Activated CD4-positive, alpha-beta memory T cell treated with anti-CD3 and anti-CD28 coated beads for 36 hours (primary cell): ENCODE measurements at regions of chr1 and their contacts with region 1.

Region 1: GRCh38 chr1:205591522-205592351 is 40.1 kb downstream of the ELK4 start:
- DNase-seq: peak; percentile 94
- H3K4me3 Mint-ChIP-seq: peak overlapping the region; percentile 77
- H3K27ac Mint-ChIP-seq: peak overlapping the region; percentile 79
- H3K4me1 Mint-ChIP-seq: peaks cover 29% of the 10 kb centered on the region
- H3K27me3 Mint-ChIP-seq: no peaks in the 10 kb centered on the region

Region 2: DNA sequence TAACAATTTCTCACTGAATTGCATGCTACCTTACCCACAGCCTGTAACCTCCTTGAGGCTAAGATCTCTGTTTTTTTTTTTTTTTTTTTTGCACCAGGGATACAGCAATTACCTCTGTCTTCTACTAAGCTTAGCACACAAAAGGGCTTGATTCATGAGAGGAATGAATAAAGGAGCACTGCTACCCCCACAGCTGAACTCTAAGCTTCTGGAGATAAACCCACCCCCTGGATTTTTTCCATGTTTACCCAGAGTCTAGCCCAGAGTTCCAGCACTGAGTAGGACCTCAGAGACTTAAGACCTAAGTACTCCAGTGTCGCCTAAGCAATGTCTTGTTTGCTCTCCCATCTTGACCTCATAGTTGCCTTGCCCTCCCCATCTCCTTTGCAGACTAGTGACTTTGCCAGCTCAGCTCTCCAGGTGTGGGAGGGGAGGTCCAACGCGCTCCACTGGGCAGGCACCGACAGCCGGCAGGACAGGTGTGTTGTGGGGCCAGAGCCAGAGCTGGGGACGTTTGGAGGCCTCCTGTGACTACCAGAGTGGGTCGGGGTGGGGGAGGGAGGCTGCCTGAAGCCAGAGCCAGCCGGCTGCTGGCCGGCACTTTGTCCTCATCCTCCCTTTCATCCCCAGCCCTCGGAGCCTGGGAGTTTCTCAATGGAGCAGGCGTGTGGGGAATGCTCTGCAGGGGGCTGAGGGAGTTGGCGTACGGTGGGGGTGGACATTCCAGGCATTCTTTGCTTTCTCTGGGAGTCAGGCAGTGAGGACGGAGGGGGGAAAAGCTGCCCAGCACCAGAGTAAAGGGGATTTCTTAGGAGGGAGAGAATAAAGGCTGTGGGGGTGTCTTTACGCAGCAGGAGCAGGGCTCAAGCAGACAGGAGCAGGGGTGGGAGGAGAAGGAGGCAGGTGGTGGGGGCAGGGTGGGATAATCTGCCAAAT is 290.6 kb before region 1 on chr1:
- CTCF ChIA-PET with region 1: no interaction called
- POLR2A ChIA-PET with region 1: no interaction called
- intact Hi-C with region 1: no loop called
- DNase-seq: no peak
- H3K4me3 Mint-ChIP-seq: no peak overlapping the region
- H3K27ac Mint-ChIP-seq: no peak overlapping the region
- H3K4me1 Mint-ChIP-seq: peaks cover 33% of the 10 kb centered on the region
- H3K27me3 Mint-ChIP-seq: no peaks in the 10 kb centered on the region

Region 3: DNA sequence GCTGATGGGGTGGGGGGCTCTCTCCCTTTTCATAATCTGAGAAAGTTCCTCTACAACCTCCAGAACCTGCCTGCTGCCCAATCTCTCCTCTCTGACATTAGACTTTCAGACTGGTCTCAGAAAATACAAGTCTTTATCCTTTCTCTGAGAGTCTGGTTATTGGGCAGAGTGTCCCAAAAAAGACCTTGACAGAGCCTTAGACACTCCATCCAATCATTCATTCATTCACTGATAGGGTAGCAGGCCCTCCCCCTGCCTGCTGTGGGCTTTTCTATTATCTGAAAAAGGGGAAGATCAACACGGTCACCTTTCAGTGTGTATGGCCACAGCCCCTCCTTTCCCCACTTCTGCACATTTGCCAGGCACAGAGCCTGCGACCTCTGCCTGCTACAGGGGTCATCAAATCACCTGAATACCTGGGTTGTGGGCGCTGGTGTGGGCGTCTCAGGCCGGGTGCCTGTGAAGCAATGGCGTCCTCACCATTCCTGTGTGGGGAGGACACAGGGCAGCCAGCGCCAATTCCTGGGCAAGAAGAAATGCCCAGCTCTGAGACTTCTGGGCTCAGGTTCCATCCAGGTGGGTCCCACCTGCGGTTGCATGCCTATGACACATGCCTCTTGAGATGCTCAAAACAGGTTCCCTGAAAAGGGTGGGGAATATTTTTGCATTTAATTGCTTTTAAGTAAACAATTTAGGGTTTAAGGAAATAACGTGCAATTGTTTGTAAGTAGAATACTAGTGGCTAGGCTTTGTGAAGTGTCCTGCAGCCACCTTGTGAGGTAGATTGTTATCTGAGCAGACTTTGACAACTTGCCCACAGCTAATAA is 12.7 kb before region 1 on chr1:
- CTCF ChIA-PET with region 1: interaction called, 10 read pairs
- POLR2A ChIA-PET with region 1: no interaction called
- intact Hi-C with region 1: no loop called
- DNase-seq: no peak
- H3K4me3 Mint-ChIP-seq: no peak overlapping the region
- H3K27ac Mint-ChIP-seq: no peak overlapping the region
- H3K4me1 Mint-ChIP-seq: no peaks in the 10 kb centered on the region
- H3K27me3 Mint-ChIP-seq: peaks cover 19% of the 10 kb centered on the region

Region 4: DNA sequence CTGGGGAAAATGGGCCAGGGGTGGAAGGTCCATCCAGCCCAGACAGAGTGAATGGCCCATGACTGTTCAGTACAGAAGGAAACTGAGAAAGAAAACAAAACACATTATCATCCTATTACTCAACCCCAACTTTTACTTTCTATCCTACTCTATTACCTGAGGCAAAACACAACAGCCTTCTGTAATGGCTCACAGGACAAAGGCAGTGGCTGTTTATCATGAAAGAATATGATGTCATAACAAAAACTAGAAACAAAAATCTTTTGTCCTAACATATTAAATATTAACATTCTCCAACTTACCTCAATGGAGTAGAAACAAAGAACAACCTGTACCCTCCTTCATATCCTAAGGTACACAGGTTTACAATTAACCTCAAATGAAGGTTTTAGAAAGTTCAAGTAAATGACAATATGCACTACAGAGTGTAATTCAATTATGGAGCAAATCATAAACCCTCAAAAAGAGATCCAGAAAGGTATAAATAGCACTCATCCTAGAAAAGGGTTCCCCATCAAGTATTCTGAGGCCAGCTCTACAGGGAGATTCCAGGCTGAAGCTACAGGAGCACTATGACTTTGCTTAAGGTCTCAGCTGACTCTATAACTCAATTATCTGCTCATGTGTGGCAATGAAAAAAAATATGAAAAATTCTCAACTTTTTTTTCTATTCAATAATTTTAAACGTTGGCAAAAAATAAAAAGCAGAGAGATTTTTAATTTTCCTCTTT is 25.0 kb after region 1 on chr1:
- CTCF ChIA-PET with region 1: interaction called, 17 read pairs
- POLR2A ChIA-PET with region 1: no interaction called
- intact Hi-C with region 1: no loop called
- DNase-seq: no peak
- H3K4me3 Mint-ChIP-seq: no peak overlapping the region
- H3K27ac Mint-ChIP-seq: peak overlapping the region; percentile 65
- H3K4me1 Mint-ChIP-seq: peaks cover 32% of the 10 kb centered on the region
- H3K27me3 Mint-ChIP-seq: no peaks in the 10 kb centered on the region

Region 5: GRCh38 chr1:205645519-205645918 is 53.8 kb after region 1 on chr1:
- CTCF ChIA-PET with region 1: interaction called, 12 read pairs
- POLR2A ChIA-PET with region 1: no interaction called
- intact Hi-C with region 1: no loop called
- DNase-seq: no peak
- H3K4me3 Mint-ChIP-seq: no peak overlapping the region
- H3K27ac Mint-ChIP-seq: no peak overlapping the region
- H3K4me1 Mint-ChIP-seq: no peaks in the 10 kb centered on the region
- H3K27me3 Mint-ChIP-seq: peaks cover 4% of the 10 kb centered on the region

Region 6: DNA sequence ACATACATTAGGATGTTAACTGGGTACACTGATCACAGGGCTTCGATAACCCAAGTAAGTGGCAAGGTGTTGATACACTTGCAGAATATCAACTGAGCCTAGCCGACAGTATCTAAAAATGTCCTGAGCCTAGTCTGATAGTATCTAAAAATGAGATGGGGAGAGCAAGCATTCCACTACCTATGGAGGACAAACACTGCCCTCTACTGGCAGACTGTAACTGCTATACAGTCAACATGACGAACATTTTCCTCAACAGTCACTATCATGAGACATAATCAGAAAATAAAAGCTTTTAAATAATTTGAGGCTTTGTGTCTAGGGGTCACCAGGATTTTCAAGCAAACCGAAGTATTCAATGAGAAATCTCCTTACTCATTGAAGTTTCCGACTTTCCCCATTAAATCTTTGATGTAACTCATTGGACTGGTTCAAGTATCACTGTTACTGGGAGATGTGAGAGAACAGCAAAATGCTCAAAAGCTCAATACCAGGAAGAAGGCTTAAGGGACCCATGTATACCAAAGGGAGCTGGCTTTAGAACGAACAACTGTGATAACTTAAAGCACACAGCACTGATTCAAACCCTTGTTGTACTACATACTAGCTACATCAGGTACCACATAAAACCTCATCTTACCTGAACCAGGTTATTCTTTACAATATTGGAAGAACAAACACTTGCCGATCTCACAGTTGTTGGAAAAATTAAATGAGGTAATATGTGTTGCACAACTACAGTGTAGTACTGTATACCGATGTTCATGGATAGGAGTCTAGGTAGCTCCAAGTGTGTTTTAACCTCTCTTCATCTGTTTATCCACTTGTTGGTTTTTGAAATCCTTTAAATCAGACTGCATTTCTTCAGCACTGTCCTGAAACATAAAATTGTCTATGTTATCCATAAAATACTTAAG is 119.6 kb after region 1 on chr1:
- CTCF ChIA-PET with region 1: interaction called, 35 read pairs
- POLR2A ChIA-PET with region 1: no interaction called
- intact Hi-C with region 1: loop called (anchors 1 kb)
- DNase-seq: peak; percentile 57
- H3K4me3 Mint-ChIP-seq: no peak overlapping the region
- H3K27ac Mint-ChIP-seq: peak overlapping the region; percentile 50
- H3K4me1 Mint-ChIP-seq: peaks cover 9% of the 10 kb centered on the region
- H3K27me3 Mint-ChIP-seq: no peaks in the 10 kb centered on the region

Region 7: GRCh38 chr1:205977402-205978014 is 385.8 kb after region 1 on chr1:
- CTCF ChIA-PET with region 1: interaction called, 10 read pairs
- POLR2A ChIA-PET with region 1: no interaction called
- intact Hi-C with region 1: no loop called
- DNase-seq: peak; percentile 82
- H3K4me3 Mint-ChIP-seq: no peak overlapping the region
- H3K27ac Mint-ChIP-seq: no peak overlapping the region
- H3K4me1 Mint-ChIP-seq: no peaks in the 10 kb centered on the region
- H3K27me3 Mint-ChIP-seq: peaks cover 2% of the 10 kb centered on the region